Psoas muscle (tissue), 8 donors: ENCODE measurements at regions of chr19 and their contacts with region 1.

Region 1: GRCh38 chr19:38402967-38403861 is at the start of gene FAM98C:
- DNase-seq: peak; percentile 96 to 98
- ATAC-seq: peak; percentile 98 to 99 (median 98)
- H3K4me3 ChIP-seq: peak within 1 kb of the TSS; percentile 93
- H3K27ac ChIP-seq: peak within 1 kb of the TSS; percentile 46
- H3K4me1 ChIP-seq: no peaks in the 10 kb centered on the region
- H3K27me3 ChIP-seq: peaks cover 0 to 17% (median 4%) of the 10 kb centered on the region in 3 donors
- CTCF ChIP-seq: peak; percentile 100
- total RNA-seq, gene FAM98C: 1.1 to 4.5 (median 1.4) TPM

Region 2: GRCh38 chr19:38441657-38442348 is 38.6 kb after region 1 on chr19:
- intact Hi-C with region 1: no loop called
- DNase-seq: no peak
- ATAC-seq: peak in 1 of 4 donors; percentile 8
- H3K4me3 ChIP-seq: no peak overlapping the region
- H3K27ac ChIP-seq: peak overlapping the region; percentile 98
- H3K4me1 ChIP-seq: peaks cover 31% of the 10 kb centered on the region
- H3K27me3 ChIP-seq: no peaks in the 10 kb centered on the region
- CTCF ChIP-seq: no peak

Region 3: DNA sequence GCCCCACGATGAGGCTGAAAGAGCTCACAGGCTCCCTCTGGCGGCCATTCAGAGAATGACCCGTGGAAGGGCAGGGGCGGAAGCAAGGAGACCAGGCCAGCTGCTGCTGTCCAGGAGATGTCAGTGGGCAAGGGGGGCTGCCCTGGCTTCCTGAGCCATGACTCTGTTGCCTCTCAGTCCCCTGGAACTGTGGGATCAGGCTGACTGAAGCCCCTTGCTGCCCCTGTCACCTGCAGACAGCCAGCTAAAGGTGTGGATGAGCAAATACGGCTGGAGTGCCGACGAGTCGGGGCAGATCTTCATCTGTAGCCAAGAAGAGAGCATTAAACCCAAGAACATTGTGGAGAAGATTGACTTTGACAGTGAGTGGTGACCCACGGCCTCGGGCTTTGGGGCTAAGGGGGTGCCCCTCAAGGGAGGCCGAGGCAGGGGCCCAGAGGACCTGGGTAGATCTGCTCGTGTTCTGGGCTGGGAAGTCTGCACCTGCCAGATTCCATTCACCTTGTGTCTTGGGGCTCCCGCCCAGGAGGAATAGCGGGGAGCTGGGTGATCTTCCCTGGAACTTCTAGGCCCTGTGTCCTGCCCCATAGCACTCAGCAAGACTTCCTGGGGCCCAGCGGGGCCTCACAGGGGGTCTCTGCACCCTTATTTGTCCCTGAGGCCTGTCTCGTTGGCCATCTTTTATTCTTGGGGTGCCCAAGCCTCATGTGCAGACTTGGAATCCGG is 231.7 kb after region 1 on chr19:
- intact Hi-C with region 1: loop called in 1 of 2 experiments (anchors 5 kb)
- DNase-seq: peak; percentile 79 to 87
- ATAC-seq: peak; percentile 66 to 77 (median 70)
- H3K4me3 ChIP-seq: no peak overlapping the region
- H3K27ac ChIP-seq: peak overlapping the region; percentile 72
- H3K4me1 ChIP-seq: peaks cover 8% of the 10 kb centered on the region
- H3K27me3 ChIP-seq: no peaks in the 10 kb centered on the region
- CTCF ChIP-seq: peak; percentile 92